ENCODE measurements at regions of chr16 and their contacts with region 1.

Region 1: GRCh38 chr16:69276148-69277115 is 34.7 kb upstream of the VPS4A start:
- DNase-seq: no peak
- H3K4me3 ChIP-seq: no peak overlapping the region
- H3K27ac ChIP-seq: no peak overlapping the region
- H3K4me1 ChIP-seq: no peaks in the 10 kb centered on the region
- H3K27me3 ChIP-seq: no peaks in the 10 kb centered on the region
- CTCF ChIP-seq: no peak
- POLR2A ChIP-seq: no peak

Region 2: DNA sequence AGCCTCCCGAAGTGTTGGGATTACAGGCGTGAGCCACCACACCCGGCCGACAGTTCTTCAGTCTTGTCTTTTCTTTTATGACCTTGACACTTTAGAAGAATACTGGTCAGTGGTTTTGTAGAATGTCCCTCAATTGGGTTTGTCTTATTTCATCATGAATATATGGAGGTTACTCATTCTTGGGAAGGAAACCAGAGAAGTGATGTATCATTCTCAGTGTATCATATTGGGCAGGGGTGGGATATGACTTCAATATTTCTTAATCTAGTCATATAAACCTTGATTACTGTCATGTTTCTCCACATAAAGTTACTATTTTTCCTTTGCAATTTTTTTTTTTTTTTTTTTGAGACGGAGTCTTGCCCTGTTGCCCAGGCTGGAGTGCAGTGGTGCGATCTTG is 52.5 kb before region 1 on chr16:
- CTCF ChIA-PET with region 1: no interaction called
- POLR2A ChIA-PET with region 1: interaction called, 10 read pairs
- dilution Hi-C with region 1: no loop called
- intact Hi-C with region 1: no loop called
- DNase-seq: no peak
- H3K4me3 ChIP-seq: no peak overlapping the region
- H3K27ac ChIP-seq: peak overlapping the region; percentile 98
- H3K4me1 ChIP-seq: peaks cover 70% of the 10 kb centered on the region
- H3K27me3 ChIP-seq: no peaks in the 10 kb centered on the region
- CTCF ChIP-seq: no peak
- POLR2A ChIP-seq: no peak

Region 3: GRCh38 chr16:69301861-69302260 is 25.4 kb after region 1 on chr16:
- CTCF ChIA-PET with region 1: no interaction called
- POLR2A ChIA-PET with region 1: no interaction called
- dilution Hi-C with region 1: no loop called
- intact Hi-C with region 1: no loop called
- DNase-seq: peak; percentile 21
- H3K4me3 ChIP-seq: no peak overlapping the region
- H3K27ac ChIP-seq: peak overlapping the region; percentile 2
- H3K4me1 ChIP-seq: peaks cover 21% of the 10 kb centered on the region
- H3K27me3 ChIP-seq: no peaks in the 10 kb centered on the region
- CTCF ChIP-seq: no peak
- POLR2A ChIP-seq: no peak